Kidney (tissue), 22 donors: ENCODE measurements at regions of chr1 and their contacts with region 1.

Region 1: GRCh38 chr1:201966171-201966570 is 10.9 kb downstream of the TIMM17A start:
- DNase-seq: no peak
- H3K4me3 ChIP-seq: no peak overlapping the region
- H3K27ac ChIP-seq: no peak overlapping the region
- H3K4me1 ChIP-seq: no peaks in the 10 kb centered on the region
- H3K27me3 ChIP-seq: no peaks in the 10 kb centered on the region
- CTCF ChIP-seq: no peak

Region 2: GRCh38 chr1:201828820-201829774 is 137.1 kb before region 1 on chr1 and contains the start of gene IPO9:
- intact Hi-C with region 1: no loop called
- DNase-seq: peak; percentile 96 to 98 (median 97)
- H3K4me3 ChIP-seq: peak within 1 kb of the TSS; percentile 94 to 98 (median 98)
- H3K27ac ChIP-seq: peak within 1 kb of the TSS; percentile 90 to 97
- H3K4me1 ChIP-seq: peaks cover 3 to 4% (median 4%) of the 10 kb centered on the region in 3 donors
- H3K27me3 ChIP-seq: no peaks in the 10 kb centered on the region
- CTCF ChIP-seq: peak; percentile 93
- total RNA-seq, gene IPO9: 39.7 TPM

Region 3: GRCh38 chr1:201890223-201890622 is 75.9 kb before region 1 on chr1:
- intact Hi-C with region 1: loop called (anchors 5 kb)
- DNase-seq: no peak
- H3K4me3 ChIP-seq: no peak overlapping the region
- H3K27ac ChIP-seq: no peak overlapping the region
- H3K4me1 ChIP-seq: peaks cover 0 to 14% (median 0%) of the 10 kb centered on the region in 3 donors
- H3K27me3 ChIP-seq: no peaks in the 10 kb centered on the region
- CTCF ChIP-seq: no peak

Region 4: GRCh38 chr1:202076050-202076511 is 109.9 kb after region 1 on chr1:
- intact Hi-C with region 1: no loop called
- DNase-seq: no peak
- H3K4me3 ChIP-seq: no peak overlapping the region
- H3K27ac ChIP-seq: no peak overlapping the region
- H3K4me1 ChIP-seq: no peaks in the 10 kb centered on the region
- H3K27me3 ChIP-seq: no peaks in the 10 kb centered on the region
- CTCF ChIP-seq: no peak